CD14-positive monocyte (primary cell): ENCODE measurements at regions of chr10 and their contacts with region 1.

Region 1: GRCh38 chr10:110871298-110872084 is at the start of gene PDCD4:
- DNase-seq: peak; percentile 90 to 95 (median 94)
- H3K4me3 ChIP-seq: peak within 1 kb of the TSS; percentile 88 to 95 (median 89)
- H3K4me3 Mint-ChIP-seq: peak within 1 kb of the TSS; percentile 91 to 92
- H3K27ac ChIP-seq: peak within 1 kb of the TSS; percentile 88 to 92
- H3K27ac Mint-ChIP-seq: peak within 1 kb of the TSS; percentile 87 to 96 (median 94)
- H3K4me1 ChIP-seq: peaks cover 43 to 63% of the 10 kb centered on the region in 2 donors
- H3K4me1 Mint-ChIP-seq: peaks cover 61% of the 10 kb centered on the region
- H3K27me3 ChIP-seq: no peaks in the 10 kb centered on the region
- H3K27me3 Mint-ChIP-seq: peaks cover 0 to 2% (median 0%) of the 10 kb centered on the region in 3 donors
- CTCF ChIP-seq: no peak
- polyA plus RNA-seq, gene PDCD4: 39.8 to 53.4 (median 48.6) TPM

Region 2: GRCh38 chr10:110803830-110804338 is 67.6 kb before region 1 on chr10:
- intact Hi-C with region 1: loop called in 1 of 2 experiments (anchors 10 kb)
- DNase-seq: peak; percentile 30 to 50 (median 47)
- H3K4me3 ChIP-seq: no peak overlapping the region
- H3K4me3 Mint-ChIP-seq: no peak overlapping the region
- H3K27ac ChIP-seq: no peak overlapping the region
- H3K27ac Mint-ChIP-seq: peak overlapping the region in 1 of 7 donors; percentile 25
- H3K4me1 ChIP-seq: peaks cover 8 to 17% of the 10 kb centered on the region in 2 donors
- H3K4me1 Mint-ChIP-seq: peaks cover 15% of the 10 kb centered on the region
- H3K27me3 ChIP-seq: no peaks in the 10 kb centered on the region
- H3K27me3 Mint-ChIP-seq: peaks cover 0 to 3% (median 3%) of the 10 kb centered on the region in 3 donors
- CTCF ChIP-seq: peak; percentile 67

Region 3: GRCh38 chr10:110834629-110835301 is 36.7 kb before region 1 on chr10:
- intact Hi-C with region 1: loop called in 1 of 2 experiments (anchors 5 kb)
- DNase-seq: no peak
- H3K4me3 ChIP-seq: no peak overlapping the region
- H3K4me3 Mint-ChIP-seq: no peak overlapping the region
- H3K27ac ChIP-seq: no peak overlapping the region
- H3K27ac Mint-ChIP-seq: peak overlapping the region in 1 of 7 donors; percentile 25
- H3K4me1 ChIP-seq: peaks cover 5% of the 10 kb centered on the region in 2 donors
- H3K4me1 Mint-ChIP-seq: peaks cover 15% of the 10 kb centered on the region
- H3K27me3 ChIP-seq: no peaks in the 10 kb centered on the region
- H3K27me3 Mint-ChIP-seq: peaks cover 0 to 4% (median 0%) of the 10 kb centered on the region in 3 donors
- CTCF ChIP-seq: no peak

Region 4: DNA sequence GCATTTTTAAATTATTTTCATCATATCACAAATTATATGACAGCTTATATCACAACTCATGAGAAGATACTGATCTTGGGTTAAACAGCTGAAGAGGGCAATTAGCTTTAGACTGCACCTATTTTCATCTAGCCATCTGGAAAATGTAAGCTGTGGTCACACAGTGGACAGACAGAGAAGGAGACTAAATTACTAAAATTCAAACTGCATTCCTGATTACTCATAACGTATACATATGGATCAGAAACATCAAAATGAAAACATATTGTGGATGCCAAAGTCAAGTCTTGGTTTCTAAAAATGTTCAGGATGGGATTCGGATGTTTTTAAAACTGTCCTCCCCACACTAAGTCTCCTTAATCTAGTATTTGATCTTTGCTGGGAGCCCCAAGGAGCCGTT is 40.9 kb after region 1 on chr10:
- intact Hi-C with region 1: loop called (anchors 5 kb)
- DNase-seq: no peak
- H3K4me3 ChIP-seq: no peak overlapping the region
- H3K4me3 Mint-ChIP-seq: no peak overlapping the region
- H3K27ac ChIP-seq: no peak overlapping the region
- H3K27ac Mint-ChIP-seq: no peak overlapping the region
- H3K4me1 ChIP-seq: peaks cover 0 to under 1% of the 10 kb centered on the region in 2 donors
- H3K4me1 Mint-ChIP-seq: peaks cover 2% of the 10 kb centered on the region
- H3K27me3 ChIP-seq: no peaks in the 10 kb centered on the region
- H3K27me3 Mint-ChIP-seq: no peaks in the 10 kb centered on the region
- CTCF ChIP-seq: no peak

Region 5: DNA sequence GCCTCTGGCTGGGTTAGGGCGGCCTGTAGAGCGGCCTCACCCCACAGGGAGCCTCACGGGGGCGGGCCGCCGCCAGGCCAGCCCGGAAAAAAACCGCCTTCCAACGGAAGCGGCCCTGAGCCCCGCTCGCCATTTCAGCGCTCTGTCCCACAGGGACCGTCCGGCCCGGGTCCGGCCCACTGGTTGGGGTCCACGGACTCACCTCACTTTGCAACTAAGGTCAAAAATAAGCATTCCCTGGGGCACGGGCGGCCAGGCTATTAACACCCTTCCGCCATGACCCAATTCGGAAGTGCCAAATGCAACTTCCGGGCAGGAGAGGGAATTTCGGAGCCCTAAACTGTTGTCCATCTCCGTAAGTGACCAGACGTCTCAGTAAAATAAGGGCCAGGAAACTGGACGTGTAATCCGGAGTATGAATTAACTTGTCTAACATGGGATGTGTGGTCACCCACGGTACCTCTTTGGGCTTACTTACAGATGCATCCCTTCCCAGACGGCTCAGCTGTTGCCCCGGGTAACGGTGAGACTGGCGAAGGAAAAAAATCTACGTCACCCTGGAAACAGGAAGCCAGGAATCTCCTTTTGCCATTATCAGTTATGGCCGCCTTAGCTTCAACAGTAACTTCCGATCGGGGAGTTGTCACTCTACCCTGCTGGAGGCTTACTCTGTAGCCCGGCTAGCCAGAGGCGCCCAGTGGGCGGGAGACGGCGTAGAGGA is 47.3 kb after region 1 on chr10 and contains the start of gene BBIP1:
- intact Hi-C with region 1: loop called (anchors 5 kb)
- DNase-seq: peak; percentile 100
- H3K4me3 ChIP-seq: peak within 1 kb of the TSS; percentile 88 to 98 (median 96)
- H3K4me3 Mint-ChIP-seq: peak within 1 kb of the TSS; percentile 97
- H3K27ac ChIP-seq: peak within 1 kb of the TSS; percentile 94 to 99
- H3K27ac Mint-ChIP-seq: peak within 1 kb of the TSS; percentile 99 to 100 (median 100)
- H3K4me1 ChIP-seq: peaks cover 16 to 31% of the 10 kb centered on the region in 2 donors
- H3K4me1 Mint-ChIP-seq: peaks cover 37% of the 10 kb centered on the region
- H3K27me3 ChIP-seq: no peaks in the 10 kb centered on the region
- H3K27me3 Mint-ChIP-seq: no peaks in the 10 kb centered on the region
- CTCF ChIP-seq: no peak
- polyA plus RNA-seq, gene BBIP1: 16.2 to 41.1 (median 26.6) TPM

Region 6: DNA sequence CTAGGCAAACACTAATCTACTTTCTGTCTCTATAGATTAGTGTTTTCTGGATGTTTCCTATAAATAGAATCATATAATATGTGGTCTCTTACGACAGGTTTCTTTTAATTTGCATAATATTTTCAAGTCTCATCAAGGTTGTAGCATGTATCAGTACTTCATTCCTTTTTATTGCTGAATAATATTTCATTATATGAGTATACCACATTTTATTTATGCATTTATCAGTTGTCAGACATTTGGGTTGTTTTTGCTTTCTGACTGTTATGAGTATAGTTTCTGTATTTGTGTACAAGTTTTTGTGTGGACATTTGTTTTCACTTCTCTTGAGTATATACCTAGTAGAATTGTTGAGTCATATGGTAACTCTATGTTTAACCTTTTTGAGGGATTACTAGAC is 96.2 kb after region 1 on chr10:
- intact Hi-C with region 1: no loop called
- DNase-seq: no peak
- H3K4me3 ChIP-seq: no peak overlapping the region
- H3K4me3 Mint-ChIP-seq: no peak overlapping the region
- H3K27ac ChIP-seq: no peak overlapping the region
- H3K27ac Mint-ChIP-seq: no peak overlapping the region
- H3K4me1 ChIP-seq: no peaks in the 10 kb centered on the region
- H3K4me1 Mint-ChIP-seq: peaks cover 29% of the 10 kb centered on the region
- H3K27me3 ChIP-seq: no peaks in the 10 kb centered on the region
- H3K27me3 Mint-ChIP-seq: no peaks in the 10 kb centered on the region
- CTCF ChIP-seq: no peak

Region 7: DNA sequence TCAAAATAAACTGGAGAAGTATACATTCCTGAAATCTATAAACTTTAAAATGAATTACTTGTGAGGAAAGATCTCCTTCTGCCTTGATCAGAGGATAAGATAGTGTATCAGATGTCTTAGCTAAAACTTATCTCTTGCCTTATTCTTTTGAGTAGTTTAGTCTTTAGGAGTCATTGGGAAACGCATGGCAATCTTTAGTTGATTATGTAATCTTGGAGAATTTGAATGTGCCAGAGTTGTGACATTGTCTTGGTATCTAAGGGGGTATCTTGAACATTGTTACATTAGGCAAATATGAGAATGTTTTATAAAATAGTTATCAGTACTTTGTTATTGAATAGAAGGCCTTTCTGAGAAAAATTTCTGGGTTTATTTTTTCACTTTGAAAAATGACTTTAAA is 143.7 kb after region 1 on chr10:
- intact Hi-C with region 1: no loop called
- DNase-seq: peak in 2 of 3 donors; percentile 40 to 63
- H3K4me3 ChIP-seq: no peak overlapping the region
- H3K4me3 Mint-ChIP-seq: no peak overlapping the region
- H3K27ac ChIP-seq: peak overlapping the region in 1 of 2 donors; percentile 51
- H3K27ac Mint-ChIP-seq: peak overlapping the region in 4 of 7 donors; percentile 13 to 71 (median 34)
- H3K4me1 ChIP-seq: peaks cover 9 to 25% of the 10 kb centered on the region in 2 donors
- H3K4me1 Mint-ChIP-seq: peaks cover 24% of the 10 kb centered on the region
- H3K27me3 ChIP-seq: no peaks in the 10 kb centered on the region
- H3K27me3 Mint-ChIP-seq: no peaks in the 10 kb centered on the region
- CTCF ChIP-seq: no peak